ENCODE measurements at regions of chr3 and their contacts with region 1.

Region 1: DNA sequence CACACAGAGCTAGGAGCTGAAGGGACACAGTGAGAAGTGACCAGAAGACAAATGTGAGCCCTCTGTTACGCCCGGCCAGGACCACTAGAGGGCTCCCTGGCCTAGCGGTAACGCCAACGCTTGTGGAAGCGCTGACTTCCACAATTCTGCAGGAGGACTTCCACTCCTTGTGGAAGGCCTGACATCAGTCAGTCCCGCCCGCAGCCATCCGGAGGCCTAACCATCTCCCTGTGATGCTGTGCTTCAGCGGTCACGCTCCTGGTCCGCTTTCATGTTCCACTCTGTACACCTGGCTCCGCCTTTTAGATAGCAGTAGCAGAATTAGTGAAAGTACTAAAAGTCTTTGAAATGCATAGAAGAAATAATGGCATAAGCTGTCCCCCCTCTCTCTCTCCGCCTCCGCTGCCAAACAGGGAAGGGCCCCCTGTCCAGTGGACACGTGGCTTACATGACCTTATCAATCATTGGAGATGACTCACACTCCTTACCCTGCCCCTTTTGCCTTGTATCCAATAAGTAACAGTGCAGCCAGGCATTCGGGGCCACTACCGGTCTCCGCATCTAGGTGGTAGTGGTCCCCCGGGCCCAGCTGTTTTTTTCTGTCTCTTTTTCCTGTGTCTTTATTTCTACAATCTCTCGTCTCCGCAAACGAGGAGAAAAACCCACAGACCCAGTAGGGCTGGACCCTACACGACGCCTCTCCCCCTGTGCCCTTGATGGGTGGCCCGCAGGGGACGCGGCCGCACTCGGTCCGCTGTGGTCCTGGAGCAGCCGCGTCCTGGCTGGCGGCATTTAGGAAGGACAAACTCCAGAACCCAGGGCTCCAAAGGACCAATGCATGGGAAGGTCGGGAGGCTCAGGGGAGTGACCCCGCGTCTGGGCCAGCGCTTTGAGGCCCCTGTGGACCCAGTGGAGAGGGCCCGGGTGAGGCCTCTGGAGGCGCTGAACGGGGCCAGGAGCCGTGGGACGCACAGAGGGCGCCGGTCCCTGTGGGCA is 27.0 kb upstream of the RPL32 start:
- DNase-seq: peak; percentile 61
- H3K4me3 ChIP-seq: 0 out of 2 replicates have a peak overlapping the region, but pooled peaks have one; percentile 13
- H3K27ac ChIP-seq: no peak overlapping the region
- H3K27me3 ChIP-seq: peaks cover 42% of the 10 kb centered on the region
- CTCF ChIP-seq: peak; percentile 95

Region 2: GRCh38 chr3:12884186-12884680 is 15.9 kb after region 1 on chr3:
- CTCF ChIA-PET with region 1: interaction called, 15 read pairs
- POLR2A ChIA-PET with region 1: no interaction called
- DNase-seq: peak; percentile 11
- H3K4me3 ChIP-seq: no peak overlapping the region
- H3K27ac ChIP-seq: no peak overlapping the region
- H3K27me3 ChIP-seq: peaks cover 18% of the 10 kb centered on the region
- CTCF ChIP-seq: no peak

Region 3: GRCh38 chr3:13161024-13161759 is 292.9 kb after region 1 on chr3:
- CTCF ChIA-PET with region 1: no interaction called
- POLR2A ChIA-PET with region 1: no interaction called
- DNase-seq: no peak
- H3K4me3 ChIP-seq: no peak overlapping the region
- H3K27ac ChIP-seq: no peak overlapping the region
- H3K27me3 ChIP-seq: peaks cover 3% of the 10 kb centered on the region
- CTCF ChIP-seq: no peak

Measured in AG04450 (cell line).